Posterior cingulate gyrus (tissue), 11 donors: ENCODE measurements at regions of chr7 and their contacts with region 1.

Region 1: DNA sequence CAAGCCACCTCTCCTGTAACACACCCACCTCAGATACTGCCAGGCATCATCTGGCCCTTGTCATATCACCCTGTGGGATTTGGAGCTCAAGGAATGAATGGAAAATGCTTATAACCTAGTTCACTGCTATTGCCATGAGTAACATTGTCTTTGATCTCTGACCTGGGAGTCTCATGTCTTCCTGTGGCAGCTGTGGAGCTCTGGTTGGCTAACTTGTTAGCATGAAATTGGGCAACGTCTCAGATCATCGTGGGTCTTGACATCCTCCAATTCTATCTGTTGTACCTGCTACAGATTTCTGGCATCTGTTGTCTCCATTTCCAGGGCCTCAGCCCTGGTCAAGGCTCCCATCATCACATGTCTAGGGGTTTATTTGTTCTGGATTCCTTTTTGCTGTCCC is 2.2 kb upstream of the TMEM270 start:
- DNase-seq: no peak

Region 2: GRCh38 chr7:73547841-73548240 is 311.0 kb before region 1 on chr7:
- intact Hi-C with region 1: no loop called
- DNase-seq: peak in 1 of 10 donors; percentile 65

Region 3: GRCh38 chr7:73606801-73607691 is 251.8 kb before region 1 on chr7:
- intact Hi-C with region 1: loop called (anchors 5 kb)
- DNase-seq: peak in 7 of 10 donors; percentile 45 to 92 (median 63)

Region 4: DNA sequence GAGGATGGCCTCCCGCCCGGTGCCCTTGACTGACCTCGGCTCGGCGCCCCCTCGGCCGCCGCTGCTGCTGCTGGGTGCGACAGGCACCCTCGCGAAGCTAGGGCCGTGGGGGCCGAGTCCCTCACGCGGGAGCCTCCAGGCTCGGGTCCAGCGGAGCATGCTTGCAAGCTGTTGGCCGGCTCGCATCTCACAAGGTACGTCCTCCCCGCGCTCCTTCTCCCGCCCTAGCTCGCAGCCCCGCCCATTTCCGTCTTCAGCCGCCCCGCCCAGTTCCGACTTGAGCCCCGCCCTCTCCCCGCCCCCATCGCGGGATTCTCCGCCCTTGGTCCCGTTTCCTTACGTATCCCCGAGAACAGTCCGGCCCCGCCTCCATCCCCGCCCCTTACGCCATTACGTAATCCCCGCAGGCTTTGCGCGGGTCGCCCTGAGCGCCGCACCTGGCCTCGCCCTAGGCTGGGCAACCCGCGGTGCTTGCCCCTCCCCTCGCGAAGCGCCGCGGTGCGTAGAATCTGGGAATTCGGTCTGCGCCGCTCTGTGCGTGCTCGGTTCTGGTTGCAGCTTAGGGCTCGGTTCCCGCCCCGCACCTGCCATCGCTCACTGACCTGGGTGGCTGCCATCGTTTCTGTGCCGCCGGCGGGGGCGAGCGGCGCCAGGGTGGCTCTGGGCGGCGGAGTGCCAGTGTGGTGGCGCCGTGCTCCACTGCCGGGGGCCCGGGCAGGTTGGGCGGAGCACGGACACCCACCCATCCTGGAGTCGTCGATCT is 120.0 kb before region 1 on chr7 and contains the start of gene ABHD11:
- intact Hi-C with region 1: loop called (anchors 5 kb)
- DNase-seq: peak; percentile 98 to 100 (median 99)

Region 5: DNA sequence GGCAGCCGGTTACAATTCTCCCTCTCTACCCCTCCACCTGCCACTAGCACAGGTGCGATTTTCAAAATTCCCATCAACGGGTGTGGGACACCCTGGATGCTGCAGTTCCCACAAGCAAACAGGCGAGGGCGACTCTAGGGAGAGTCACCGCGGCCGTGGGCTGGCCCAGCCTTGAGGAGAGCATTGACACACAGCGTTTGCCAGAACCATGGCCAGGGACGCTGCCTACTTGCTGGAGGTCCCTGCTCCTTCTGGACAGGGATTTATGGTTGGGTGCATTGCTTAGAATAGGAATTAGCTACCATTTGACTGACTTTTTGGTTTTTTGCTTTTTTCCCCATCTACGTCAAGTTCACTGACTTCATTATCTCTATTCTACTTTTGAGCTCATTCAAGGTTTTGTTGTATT is 47.0 kb before region 1 on chr7:
- intact Hi-C with region 1: loop called (anchors 5 kb)
- DNase-seq: peak in 4 of 10 donors; percentile 40 to 88 (median 69)

Region 6: DNA sequence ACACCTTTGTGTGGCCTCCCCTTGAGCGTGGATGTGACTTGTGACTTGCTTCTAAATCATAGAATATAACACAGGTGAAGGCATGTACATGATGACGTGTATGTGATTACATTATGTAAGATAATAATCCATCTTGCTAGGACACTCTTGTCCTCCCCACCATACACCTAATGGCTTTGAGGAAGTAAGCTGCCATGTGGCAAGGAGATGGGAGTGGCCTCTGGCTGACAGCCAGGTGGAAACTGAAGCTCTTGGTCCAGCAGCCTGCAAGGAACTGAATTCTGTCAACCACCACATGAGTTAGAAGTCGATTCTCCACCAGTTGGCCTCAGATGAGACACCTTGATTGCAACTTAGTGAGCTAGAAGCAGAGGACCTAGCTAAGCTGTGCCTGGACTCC is 101.7 kb after region 1 on chr7:
- intact Hi-C with region 1: no loop called
- DNase-seq: peak in 1 of 10 donors; percentile 33

Region 7: GRCh38 chr7:74199551-74200242 is 340.9 kb after region 1 on chr7:
- intact Hi-C with region 1: no loop called
- DNase-seq: peak in 1 of 10 donors; percentile 11

Region 8: GRCh38 chr7:74625446-74625845 is 766.6 kb after region 1 on chr7:
- intact Hi-C with region 1: no loop called
- DNase-seq: no peak